ENCODE measurements at regions of chr12 and their contacts with region 1.

Region 1: GRCh38 chr12:7933255-7933729 is 2.7 kb downstream of the SLC2A3 start:
- DNase-seq: peak; percentile 85 to 87
- H3K4me3 ChIP-seq: peak overlapping the region; percentile 76
- H3K4me3 Mint-ChIP-seq: no peak overlapping the region
- H3K27ac Mint-ChIP-seq: no peak overlapping the region
- H3K4me1 ChIP-seq: peaks cover 46% of the 10 kb centered on the region
- H3K4me1 Mint-ChIP-seq: peaks cover 33% of the 10 kb centered on the region
- H3K27me3 ChIP-seq: no peaks in the 10 kb centered on the region
- H3K27me3 Mint-ChIP-seq: no peaks in the 10 kb centered on the region
- CTCF ChIP-seq: peak; percentile 79 to 82

Region 2: GRCh38 chr12:7709969-7710675 is 223.2 kb before region 1 on chr12:
- CTCF ChIA-PET with region 1: no interaction called
- POLR2A ChIA-PET with region 1: interaction called, 12 read pairs
- intact Hi-C with region 1: no loop called
- DNase-seq: peak; percentile 83 to 86
- H3K4me3 ChIP-seq: no peak overlapping the region
- H3K4me3 Mint-ChIP-seq: peak overlapping the region; percentile 81
- H3K27ac Mint-ChIP-seq: peak overlapping the region; percentile 96
- H3K4me1 ChIP-seq: peaks cover 50% of the 10 kb centered on the region
- H3K4me1 Mint-ChIP-seq: peaks cover 54% of the 10 kb centered on the region
- H3K27me3 ChIP-seq: no peaks in the 10 kb centered on the region
- H3K27me3 Mint-ChIP-seq: no peaks in the 10 kb centered on the region
- CTCF ChIP-seq: no peak

Region 3: DNA sequence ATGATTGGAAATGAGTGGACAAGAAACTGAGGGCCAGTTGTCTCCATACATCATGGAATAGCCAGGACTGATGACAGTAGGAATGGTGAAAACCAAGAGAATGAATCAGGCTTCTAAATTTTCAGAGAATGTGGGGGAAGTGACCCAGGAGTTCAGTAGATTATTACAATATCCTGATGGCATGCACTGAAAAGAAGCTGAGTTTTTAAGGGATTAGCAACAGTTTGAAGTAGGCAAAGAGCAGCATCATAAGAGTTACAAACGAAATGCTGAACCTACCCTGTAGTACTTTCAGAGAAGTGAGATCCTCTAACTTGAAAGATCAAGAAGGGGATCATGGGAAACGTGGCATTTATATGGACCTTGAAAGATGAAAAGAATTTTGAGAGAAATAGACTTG is 73.7 kb before region 1 on chr12:
- CTCF ChIA-PET with region 1: interaction called, 26 read pairs
- POLR2A ChIA-PET with region 1: interaction called, 8 read pairs
- intact Hi-C with region 1: loop called (anchors 1 kb)
- DNase-seq: peak in 1 of 2 experiments; percentile 7
- H3K4me3 ChIP-seq: no peak overlapping the region
- H3K4me3 Mint-ChIP-seq: no peak overlapping the region
- H3K27ac Mint-ChIP-seq: peak overlapping the region; percentile 92
- H3K4me1 ChIP-seq: peaks cover 56% of the 10 kb centered on the region
- H3K4me1 Mint-ChIP-seq: peaks cover 52% of the 10 kb centered on the region
- H3K27me3 ChIP-seq: no peaks in the 10 kb centered on the region
- H3K27me3 Mint-ChIP-seq: no peaks in the 10 kb centered on the region
- CTCF ChIP-seq: no peak

Region 4: GRCh38 chr12:7915559-7916403 is 17.5 kb before region 1 on chr12:
- CTCF ChIA-PET with region 1: interaction called, 7 read pairs
- POLR2A ChIA-PET with region 1: interaction called, 23 read pairs
- intact Hi-C with region 1: no loop called
- DNase-seq: peak; percentile 62 to 78
- H3K4me3 ChIP-seq: no peak overlapping the region
- H3K4me3 Mint-ChIP-seq: peak overlapping the region; percentile 43
- H3K27ac Mint-ChIP-seq: peak overlapping the region; percentile 73
- H3K4me1 ChIP-seq: peaks cover 15% of the 10 kb centered on the region
- H3K4me1 Mint-ChIP-seq: peaks cover 62% of the 10 kb centered on the region
- H3K27me3 ChIP-seq: no peaks in the 10 kb centered on the region
- H3K27me3 Mint-ChIP-seq: peaks cover 3% of the 10 kb centered on the region
- CTCF ChIP-seq: no peak

Region 5: DNA sequence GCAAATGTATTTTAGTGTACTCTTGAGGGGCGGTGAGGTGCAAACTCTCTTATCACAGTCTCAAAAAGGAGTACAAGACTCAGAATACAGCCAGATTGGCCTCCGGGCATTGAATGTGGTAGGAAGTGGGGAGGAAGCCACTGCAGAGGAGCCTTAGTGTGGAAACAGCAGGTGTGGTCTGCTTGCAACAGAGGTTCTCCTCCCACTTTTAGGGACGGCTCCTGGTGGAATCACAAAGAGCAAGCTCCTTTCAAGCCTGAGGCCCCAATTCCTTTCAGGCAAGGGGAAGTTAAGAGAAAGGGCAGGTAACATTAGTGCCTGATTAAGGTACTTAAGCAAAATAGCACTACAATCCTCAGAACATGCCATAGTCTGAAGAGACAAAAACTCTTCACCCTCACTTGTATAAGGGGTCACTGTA is 26.4 kb after region 1 on chr12:
- CTCF ChIA-PET with region 1: interaction called, 91 read pairs
- POLR2A ChIA-PET with region 1: interaction called, 749 read pairs
- intact Hi-C with region 1: loop called (anchors 1 kb)
- DNase-seq: peak; percentile 87 to 91
- H3K4me3 ChIP-seq: peak overlapping the region; percentile 58
- H3K4me3 Mint-ChIP-seq: peak overlapping the region; percentile 73
- H3K27ac Mint-ChIP-seq: peak overlapping the region; percentile 47
- H3K4me1 ChIP-seq: peaks cover 55% of the 10 kb centered on the region
- H3K4me1 Mint-ChIP-seq: peaks cover 43% of the 10 kb centered on the region
- H3K27me3 ChIP-seq: no peaks in the 10 kb centered on the region
- H3K27me3 Mint-ChIP-seq: no peaks in the 10 kb centered on the region
- CTCF ChIP-seq: no peak

Region 6: GRCh38 chr12:7981446-7981845 is 48.2 kb after region 1 on chr12:
- CTCF ChIA-PET with region 1: interaction called, 12 read pairs
- POLR2A ChIA-PET with region 1: interaction called, 44 read pairs
- intact Hi-C with region 1: loop called (anchors 2 kb)
- DNase-seq: peak; percentile 67 to 68
- H3K4me3 ChIP-seq: no peak overlapping the region
- H3K4me3 Mint-ChIP-seq: peak overlapping the region; percentile 49
- H3K27ac Mint-ChIP-seq: peak overlapping the region; percentile 93
- H3K4me1 ChIP-seq: peaks cover 78% of the 10 kb centered on the region
- H3K4me1 Mint-ChIP-seq: peaks cover 69% of the 10 kb centered on the region
- H3K27me3 ChIP-seq: no peaks in the 10 kb centered on the region
- H3K27me3 Mint-ChIP-seq: no peaks in the 10 kb centered on the region
- CTCF ChIP-seq: no peak

Region 7: GRCh38 chr12:7995266-7995963 is 62.1 kb after region 1 on chr12:
- CTCF ChIA-PET with region 1: interaction called, 25 read pairs
- POLR2A ChIA-PET with region 1: interaction called, 19 read pairs
- intact Hi-C with region 1: loop called (anchors 1 kb)
- DNase-seq: peak; percentile 90 to 91
- H3K4me3 ChIP-seq: no peak overlapping the region
- H3K4me3 Mint-ChIP-seq: no peak overlapping the region
- H3K27ac Mint-ChIP-seq: no peak overlapping the region
- H3K4me1 ChIP-seq: peaks cover 46% of the 10 kb centered on the region
- H3K4me1 Mint-ChIP-seq: peaks cover 13% of the 10 kb centered on the region
- H3K27me3 ChIP-seq: no peaks in the 10 kb centered on the region
- H3K27me3 Mint-ChIP-seq: no peaks in the 10 kb centered on the region
- CTCF ChIP-seq: peak; percentile 73 to 94

Measured in Caco-2 (cell line).